Testis (tissue), 5 donors: ENCODE measurements at regions of chr2 and their contacts with region 1.

Region 1: GRCh38 chr2:95345566-95346230 is 48.6 kb downstream of the KCNIP3 start:
- DNase-seq: peak; percentile 92
- H3K4me3 ChIP-seq: peak overlapping the region; percentile 64 to 67
- H3K27ac ChIP-seq: peak overlapping the region; percentile 71 to 86
- H3K4me1 ChIP-seq: peaks cover 32% of the 10 kb centered on the region
- H3K27me3 ChIP-seq: no peaks in the 10 kb centered on the region
- CTCF ChIP-seq: peak; percentile 72 to 83 (median 81)
- POLR2A ChIP-seq: no peak

Region 2: DNA sequence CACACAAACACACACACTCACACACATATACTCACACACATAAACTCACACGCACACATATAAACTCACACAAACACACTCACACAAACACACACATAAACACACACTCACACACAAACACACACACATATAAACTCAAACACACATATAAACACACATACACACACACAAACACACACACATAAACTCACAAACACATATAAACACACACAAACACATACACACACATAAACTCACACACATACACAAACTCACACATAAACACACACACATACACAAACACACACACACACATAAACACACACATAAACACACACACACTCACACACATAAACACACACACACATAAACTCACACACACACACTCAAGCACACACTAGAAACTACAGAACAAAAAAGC is 592.2 kb before region 1 on chr2:
- intact Hi-C with region 1: no loop called
- DNase-seq: no peak
- H3K4me3 ChIP-seq: no peak overlapping the region
- H3K27ac ChIP-seq: no peak overlapping the region
- H3K4me1 ChIP-seq: no peaks in the 10 kb centered on the region
- H3K27me3 ChIP-seq: no peaks in the 10 kb centered on the region
- CTCF ChIP-seq: no peak
- POLR2A ChIP-seq: no peak

Region 3: GRCh38 chr2:95389245-95390119 is 43.8 kb after region 1 on chr2:
- intact Hi-C with region 1: loop called (anchors 5 kb)
- DNase-seq: peak; percentile 79
- H3K4me3 ChIP-seq: no peak overlapping the region
- H3K27ac ChIP-seq: no peak overlapping the region
- H3K4me1 ChIP-seq: peaks cover 53% of the 10 kb centered on the region
- H3K27me3 ChIP-seq: no peaks in the 10 kb centered on the region
- CTCF ChIP-seq: peak; percentile 75 to 96 (median 90)
- POLR2A ChIP-seq: no peak

Region 4: GRCh38 chr2:95402370-95403203 is 56.9 kb after region 1 on chr2 and contains the start of gene FAHD2A:
- intact Hi-C with region 1: loop called (anchors 5 kb)
- DNase-seq: peak; percentile 98
- H3K4me3 ChIP-seq: peak within 1 kb of the TSS; percentile 84 to 86
- H3K27ac ChIP-seq: peak within 1 kb of the TSS; percentile 80 to 89
- H3K4me1 ChIP-seq: peaks cover 16% of the 10 kb centered on the region
- H3K27me3 ChIP-seq: no peaks in the 10 kb centered on the region
- CTCF ChIP-seq: no peak
- POLR2A ChIP-seq: no peak
- total RNA-seq, gene FAHD2A: 48.5 to 48.9 TPM